BJ (cell line): ENCODE measurements at regions of chr18 and their contacts with region 1.

Region 1: DNA sequence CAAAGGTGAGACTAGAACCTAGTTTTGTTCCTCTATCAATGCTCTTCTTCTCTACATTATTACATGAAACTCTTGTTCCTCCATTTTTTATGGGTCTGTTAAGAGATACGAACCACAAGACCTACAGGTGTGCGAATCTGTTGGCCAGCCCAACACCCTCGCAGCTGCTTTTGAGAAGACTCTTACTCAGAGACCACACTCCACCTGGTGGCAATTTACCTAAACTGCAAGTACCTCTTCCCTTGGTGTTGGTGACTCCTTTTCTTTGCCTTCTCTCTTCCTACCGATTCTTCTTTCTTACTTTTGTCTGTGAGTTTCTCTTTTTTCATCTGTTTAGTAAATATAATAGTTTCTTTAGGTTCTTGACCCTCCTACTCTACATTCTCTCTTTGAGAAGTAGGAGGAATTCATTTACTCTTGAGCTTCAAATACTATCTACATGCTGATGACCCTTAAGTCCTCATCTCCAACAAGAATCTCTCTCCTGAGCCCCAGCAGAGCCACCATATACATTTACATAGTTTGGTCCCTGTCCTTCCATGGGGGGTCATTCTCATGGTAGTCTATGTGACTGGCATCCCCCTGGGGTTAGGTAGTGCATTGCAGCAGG is 81.8 kb upstream of the GAREM1 start:
- DNase-seq: peak; percentile 0
- H3K4me3 ChIP-seq: no peak overlapping the region
- H3K27me3 ChIP-seq: no peaks in the 10 kb centered on the region
- CTCF ChIP-seq: peak; percentile 62

Region 2: DNA sequence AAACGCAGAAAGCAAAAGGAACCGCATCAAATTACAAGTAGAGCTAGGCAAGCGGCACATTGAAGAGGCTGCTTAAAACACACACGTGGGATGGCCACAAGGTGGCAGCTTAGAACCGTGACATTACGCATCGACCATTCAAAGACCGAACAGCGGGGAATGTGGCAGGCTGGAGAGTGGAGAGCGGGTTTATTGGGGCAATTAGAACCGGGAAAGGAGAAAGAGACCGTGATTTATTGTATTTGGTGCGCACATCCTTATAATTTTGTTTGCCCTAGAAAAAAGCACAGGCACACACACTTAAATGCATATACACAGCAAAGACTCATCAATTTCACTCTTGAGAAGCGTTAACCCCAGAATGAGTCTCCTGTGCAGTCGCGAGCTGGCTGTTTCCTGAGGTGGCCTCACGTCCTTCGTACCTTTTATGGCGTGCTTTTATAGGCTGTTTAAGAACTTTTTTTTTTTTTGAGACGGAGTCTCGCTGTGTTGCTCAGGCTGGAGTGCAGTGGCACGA is 394.4 kb before region 1 on chr18:
- CTCF ChIA-PET with region 1: interaction called, 59 read pairs
- POLR2A ChIA-PET with region 1: no interaction called
- DNase-seq: peak; percentile 25
- H3K4me3 ChIP-seq: no peak overlapping the region
- H3K27me3 ChIP-seq: no peaks in the 10 kb centered on the region
- CTCF ChIP-seq: peak; percentile 84

Region 3: DNA sequence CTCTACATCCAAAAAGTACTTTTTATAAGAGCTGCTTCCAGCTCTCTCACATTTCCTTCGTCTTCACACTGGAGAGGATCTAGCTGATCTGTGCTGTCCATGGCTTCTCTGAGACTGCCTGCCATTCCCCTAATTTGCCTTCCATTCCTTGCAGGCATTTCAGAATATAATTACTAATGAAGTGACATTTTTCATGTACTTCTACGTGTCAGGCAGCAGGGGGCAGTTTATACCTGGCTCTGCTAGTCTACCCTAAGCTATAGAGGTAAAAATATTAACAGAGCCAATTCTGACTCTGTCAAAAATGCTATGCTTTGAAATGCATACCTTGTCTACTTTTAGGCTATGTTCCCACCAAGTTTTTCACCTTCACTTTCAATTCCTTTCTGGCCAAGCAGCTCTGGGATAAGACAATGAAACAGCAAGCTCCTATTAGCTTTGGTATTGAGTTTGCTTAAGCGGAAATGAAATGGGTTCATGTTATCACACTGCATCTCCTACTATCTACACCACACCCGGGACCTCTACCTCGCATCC is 280.8 kb before region 1 on chr18:
- CTCF ChIA-PET with region 1: interaction called, 39 read pairs
- POLR2A ChIA-PET with region 1: no interaction called
- DNase-seq: no peak
- H3K4me3 ChIP-seq: no peak overlapping the region
- H3K27me3 ChIP-seq: peaks cover 2% of the 10 kb centered on the region; the same call in 1 of the 2 replicates
- CTCF ChIP-seq: peak; percentile 68

Region 4: DNA sequence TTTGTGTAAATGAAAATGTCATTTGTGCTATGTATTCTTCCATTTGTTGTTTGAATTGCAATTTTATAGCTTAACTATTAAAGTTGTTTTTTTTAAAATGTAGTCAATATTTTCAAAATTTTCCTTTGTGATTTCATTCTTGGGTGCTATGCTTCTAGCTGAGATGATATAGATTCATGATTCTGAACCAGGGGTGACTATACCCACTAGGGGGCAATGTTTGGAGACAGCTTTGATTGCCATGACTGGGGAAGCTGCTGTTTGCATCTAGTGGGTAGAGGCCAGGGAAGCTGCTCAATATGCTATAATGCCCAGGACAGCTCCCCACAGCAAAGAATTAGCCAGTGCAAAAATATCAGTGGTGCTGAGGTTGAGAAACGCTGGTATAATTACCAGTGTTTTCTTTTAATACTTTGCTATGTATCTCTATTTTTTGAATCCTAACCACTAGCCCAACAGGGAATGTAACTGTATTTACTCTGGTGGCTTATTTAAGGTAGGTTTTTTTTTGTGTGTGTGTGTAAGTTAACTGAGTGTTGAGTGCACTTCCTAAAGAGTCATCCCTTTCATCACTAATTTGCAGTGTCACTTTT is 262.9 kb before region 1 on chr18:
- CTCF ChIA-PET with region 1: interaction called, 10 read pairs
- POLR2A ChIA-PET with region 1: no interaction called
- DNase-seq: no peak
- H3K4me3 ChIP-seq: no peak overlapping the region
- H3K27me3 ChIP-seq: no peaks in the 10 kb centered on the region
- CTCF ChIP-seq: peak; percentile 82

Region 5: GRCh38 chr18:32566960-32567359 is 14.4 kb after region 1 on chr18:
- CTCF ChIA-PET with region 1: no interaction called
- POLR2A ChIA-PET with region 1: no interaction called
- DNase-seq: no peak
- H3K4me3 ChIP-seq: no peak overlapping the region
- H3K27me3 ChIP-seq: no peaks in the 10 kb centered on the region
- CTCF ChIP-seq: no peak

Region 6: DNA sequence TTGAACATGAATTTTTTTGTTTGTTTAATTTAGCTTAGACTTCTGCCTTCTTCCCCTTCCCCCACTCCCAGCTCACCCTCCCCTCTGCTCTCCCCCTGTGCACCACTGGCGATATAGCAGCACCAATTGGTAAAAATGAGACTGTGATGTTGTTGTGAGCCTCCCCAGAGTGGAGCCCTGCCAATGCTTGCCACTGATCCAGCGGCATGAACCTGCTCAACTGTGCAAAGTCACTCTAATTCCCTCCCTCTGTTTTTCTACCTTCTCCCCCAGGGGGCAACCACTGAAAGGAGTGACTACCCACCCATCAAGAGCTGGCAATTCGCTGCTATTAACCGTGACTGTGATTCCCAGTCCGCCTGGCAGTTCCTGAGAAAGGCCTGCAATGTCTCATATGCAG is 190.1 kb after region 1 on chr18:
- CTCF ChIA-PET with region 1: no interaction called
- POLR2A ChIA-PET with region 1: no interaction called
- DNase-seq: no peak
- H3K4me3 ChIP-seq: no peak overlapping the region
- H3K27me3 ChIP-seq: no peaks in the 10 kb centered on the region
- CTCF ChIP-seq: no peak